ENCODE measurements at regions of chr13 and their contacts with region 1.

Region 1: GRCh38 chr13:100721885-100722512 is 47.4 kb upstream of the TMTC4 start:
- DNase-seq: peak in 5 of 10 donors; percentile 19 to 78 (median 56)

Region 2: GRCh38 chr13:100039740-100040139 is 682.3 kb before region 1 on chr13:
- intact Hi-C with region 1: no loop called
- DNase-seq: no peak

Region 3: DNA sequence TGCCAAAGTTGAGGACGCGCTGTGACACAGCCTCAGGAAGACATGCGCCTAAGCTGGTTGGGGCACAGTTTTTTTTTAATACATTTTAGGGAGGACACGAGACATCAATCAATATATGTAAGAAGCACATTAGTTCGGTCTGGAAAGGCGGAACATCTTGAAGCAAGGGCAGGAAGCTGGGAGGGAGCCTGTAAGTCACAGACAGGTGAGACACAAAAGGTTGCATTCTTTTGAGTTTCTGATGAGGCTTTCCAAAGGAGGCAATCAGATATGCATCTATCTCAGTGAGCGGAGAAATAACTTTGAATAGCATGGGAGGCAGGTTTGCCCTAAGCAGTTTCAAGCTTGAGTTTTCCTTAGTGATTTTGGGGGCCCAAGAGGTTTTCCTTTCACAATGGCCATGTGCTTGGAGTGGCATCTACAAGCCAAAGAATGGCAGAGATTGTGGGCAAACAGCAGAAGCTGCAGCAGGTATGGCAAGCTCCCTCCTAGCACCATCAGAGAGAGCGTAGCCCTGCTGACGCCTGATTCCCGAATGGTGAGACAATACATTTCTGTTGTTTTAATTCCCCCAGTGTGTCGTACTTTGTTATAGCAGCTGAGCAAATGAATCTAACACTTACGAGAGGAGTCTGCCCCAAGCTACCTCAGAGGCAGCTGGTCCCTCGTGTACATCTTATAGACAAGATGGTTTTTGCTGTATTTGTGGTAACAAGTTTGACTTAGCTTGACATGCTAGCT is 52.1 kb after region 1 on chr13:
- intact Hi-C with region 1: no loop called
- DNase-seq: no peak

Region 4: GRCh38 chr13:100987953-100988352 is 266.0 kb after region 1 on chr13:
- intact Hi-C with region 1: loop called (anchors 1 kb)
- DNase-seq: peak in 4 of 10 donors; percentile 8 to 33 (median 14)

Measured in posterior cingulate gyrus (tissue), 11 donors.